ENCODE measurements at regions of chr22 and their contacts with region 1.

Region 1: GRCh38 chr22:37428649-37429586 is 1.6 kb upstream of the ELFN2 start:
- DNase-seq: peak; percentile 86
- H3K4me3 Mint-ChIP-seq: peak overlapping the region; percentile 33
- H3K27ac Mint-ChIP-seq: no peak overlapping the region
- H3K4me1 Mint-ChIP-seq: peaks cover 26% of the 10 kb centered on the region
- H3K27me3 Mint-ChIP-seq: peaks cover 52% of the 10 kb centered on the region

Region 2: GRCh38 chr22:37316875-37317371 is 112.0 kb before region 1 on chr22:
- intact Hi-C with region 1: loop called (anchors 2 kb)
- DNase-seq: peak; percentile 90
- H3K4me3 Mint-ChIP-seq: no peak overlapping the region
- H3K27ac Mint-ChIP-seq: no peak overlapping the region
- H3K4me1 Mint-ChIP-seq: peaks cover 36% of the 10 kb centered on the region
- H3K27me3 Mint-ChIP-seq: peaks cover 14% of the 10 kb centered on the region

Region 3: DNA sequence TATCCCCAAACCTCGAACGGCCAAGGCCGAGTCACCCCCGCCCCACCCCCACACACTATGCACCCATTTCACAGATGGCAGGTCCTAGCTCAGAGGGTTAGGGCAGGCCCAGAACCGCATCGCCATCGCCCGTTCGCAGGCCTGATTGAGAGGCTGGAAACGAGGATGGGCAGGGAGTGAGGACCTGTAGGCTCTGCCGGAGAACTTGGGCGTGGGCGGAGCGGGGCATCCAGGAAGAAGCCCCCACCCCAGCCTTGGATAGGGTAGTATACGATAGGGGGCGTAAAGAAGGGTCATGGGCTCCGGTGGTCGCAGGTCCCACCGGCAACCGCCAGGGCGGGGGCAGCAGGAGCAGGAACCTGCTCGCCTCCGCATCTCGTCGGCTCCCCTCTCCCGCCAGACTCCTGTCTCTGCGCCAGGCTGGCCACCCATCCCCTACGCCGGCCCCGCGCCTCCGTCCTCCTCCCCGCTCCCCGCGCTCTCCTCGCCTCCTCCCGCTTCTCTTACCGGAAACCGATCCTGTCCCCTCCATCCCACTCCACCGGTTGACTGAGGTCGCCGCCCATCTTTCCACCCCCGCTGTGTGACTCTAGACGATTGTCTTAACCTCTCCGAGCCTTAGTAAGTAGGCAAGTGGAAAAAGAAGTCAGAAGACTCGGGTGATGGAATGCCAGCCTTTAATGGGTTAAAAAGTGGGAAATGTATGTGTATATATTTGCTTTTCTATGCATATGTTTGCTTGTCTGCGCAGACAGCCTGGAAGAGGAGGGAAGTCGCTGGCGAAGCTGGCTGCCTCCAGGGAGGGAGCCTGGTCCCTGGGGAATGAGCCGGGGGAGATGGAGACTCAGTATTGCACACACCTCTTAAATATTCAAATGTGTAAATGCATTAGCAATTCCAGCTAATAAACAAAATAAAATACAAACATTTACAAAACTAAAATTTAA is 93.8 kb before region 1 on chr22:
- intact Hi-C with region 1: loop called (anchors 5 kb)
- DNase-seq: no peak
- H3K4me3 Mint-ChIP-seq: peak overlapping the region; percentile 7
- H3K27ac Mint-ChIP-seq: peak overlapping the region; percentile 26
- H3K4me1 Mint-ChIP-seq: peaks cover 5% of the 10 kb centered on the region
- H3K27me3 Mint-ChIP-seq: peaks cover 48% of the 10 kb centered on the region

Region 4: GRCh38 chr22:37345863-37346504 is 82.9 kb before region 1 on chr22:
- intact Hi-C with region 1: no loop called
- DNase-seq: no peak
- H3K4me3 Mint-ChIP-seq: no peak overlapping the region
- H3K27ac Mint-ChIP-seq: no peak overlapping the region
- H3K4me1 Mint-ChIP-seq: no peaks in the 10 kb centered on the region
- H3K27me3 Mint-ChIP-seq: peaks cover 2% of the 10 kb centered on the region

Region 5: GRCh38 chr22:37561212-37562048 is 132.5 kb after region 1 on chr22:
- intact Hi-C with region 1: no loop called
- DNase-seq: peak; percentile 91
- H3K4me3 Mint-ChIP-seq: peak overlapping the region; percentile 67
- H3K27ac Mint-ChIP-seq: peak overlapping the region; percentile 74
- H3K4me1 Mint-ChIP-seq: peaks cover 17% of the 10 kb centered on the region
- H3K27me3 Mint-ChIP-seq: peaks cover 59% of the 10 kb centered on the region

Region 6: GRCh38 chr22:37849089-37849751 is 420.3 kb after region 1 on chr22 and contains the start of gene EIF3L:
- intact Hi-C with region 1: no loop called
- DNase-seq: peak; percentile 97
- H3K4me3 Mint-ChIP-seq: peak within 1 kb of the TSS; percentile 98
- H3K27ac Mint-ChIP-seq: peak within 1 kb of the TSS; percentile 97
- H3K4me1 Mint-ChIP-seq: peaks cover 41% of the 10 kb centered on the region
- H3K27me3 Mint-ChIP-seq: no peaks in the 10 kb centered on the region
- total RNA-seq, gene EIF3L: 460 and 480 TPM in 2 replicates

Measured in activated CD4-positive, alpha-beta T cell treated with anti-CD3 and anti-CD28 coated beads, Interleukin-2, amount 10 ng/mL, durations not matched to agents 24 days and 14 days (primary cell).